ENCODE measurements at regions of chr20 and their contacts with region 1.

Region 1: DNA sequence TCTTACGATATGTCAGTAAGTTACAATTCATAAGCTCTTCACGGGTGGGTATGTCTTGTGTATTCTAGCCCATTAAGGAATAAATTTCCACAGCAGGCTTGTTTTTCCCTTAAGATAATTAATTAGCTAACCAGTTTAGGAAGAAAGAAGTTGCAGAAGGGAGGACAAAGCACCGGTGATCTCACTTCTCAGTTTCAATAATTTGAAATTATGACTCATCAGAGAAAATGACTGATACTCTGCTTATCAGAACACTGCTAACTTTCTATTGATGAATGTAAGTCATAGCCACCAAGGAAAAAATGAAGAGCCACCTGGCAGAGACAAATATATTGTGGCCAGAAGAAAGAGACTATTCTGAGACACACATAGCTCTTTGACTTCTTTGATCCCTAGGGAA is 35.0 kb upstream of the ENTPD6 start:
- DNase-seq: no peak
- H3K4me3 Mint-ChIP-seq: no peak overlapping the region
- H3K27ac Mint-ChIP-seq: no peak overlapping the region
- H3K4me1 Mint-ChIP-seq: peaks cover 16% of the 10 kb centered on the region
- H3K27me3 Mint-ChIP-seq: peaks cover 5% of the 10 kb centered on the region

Region 2: DNA sequence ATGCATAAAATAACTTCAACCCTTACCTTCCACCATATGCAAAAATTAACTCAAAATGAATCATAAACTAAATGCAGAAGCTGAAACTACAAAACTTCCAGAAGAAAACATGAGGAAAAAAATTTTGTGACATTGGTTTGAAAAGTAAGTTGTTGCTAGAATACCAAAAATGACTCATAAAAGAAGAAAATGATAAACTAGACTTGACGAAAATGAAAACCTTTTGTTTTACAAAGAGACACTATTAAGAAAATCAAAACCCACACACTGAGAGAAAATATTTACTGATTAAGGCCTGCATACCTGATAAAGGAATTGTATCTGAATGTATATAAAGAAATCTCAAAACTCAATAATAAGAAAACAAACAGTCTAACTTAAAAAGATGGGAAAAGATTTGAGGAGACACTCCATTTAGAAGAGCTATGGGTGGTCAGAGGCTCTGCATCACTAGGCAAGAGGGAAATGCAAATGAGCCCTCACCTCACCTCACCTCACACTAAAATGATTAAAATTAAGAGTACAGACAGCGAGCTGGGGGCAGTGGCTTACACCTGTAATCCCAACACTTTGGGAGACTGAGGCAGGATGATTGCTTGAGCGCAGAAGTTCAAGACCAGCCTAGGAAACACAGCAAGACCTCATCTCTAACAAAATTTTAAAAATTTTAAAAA is 309.0 kb before region 1 on chr20:
- CTCF ChIA-PET with region 1: no interaction called
- intact Hi-C with region 1: no loop called
- DNase-seq: no peak
- H3K4me3 Mint-ChIP-seq: no peak overlapping the region
- H3K27ac Mint-ChIP-seq: no peak overlapping the region
- H3K4me1 Mint-ChIP-seq: no peaks in the 10 kb centered on the region
- H3K27me3 Mint-ChIP-seq: peaks cover 20% of the 10 kb centered on the region

Region 3: DNA sequence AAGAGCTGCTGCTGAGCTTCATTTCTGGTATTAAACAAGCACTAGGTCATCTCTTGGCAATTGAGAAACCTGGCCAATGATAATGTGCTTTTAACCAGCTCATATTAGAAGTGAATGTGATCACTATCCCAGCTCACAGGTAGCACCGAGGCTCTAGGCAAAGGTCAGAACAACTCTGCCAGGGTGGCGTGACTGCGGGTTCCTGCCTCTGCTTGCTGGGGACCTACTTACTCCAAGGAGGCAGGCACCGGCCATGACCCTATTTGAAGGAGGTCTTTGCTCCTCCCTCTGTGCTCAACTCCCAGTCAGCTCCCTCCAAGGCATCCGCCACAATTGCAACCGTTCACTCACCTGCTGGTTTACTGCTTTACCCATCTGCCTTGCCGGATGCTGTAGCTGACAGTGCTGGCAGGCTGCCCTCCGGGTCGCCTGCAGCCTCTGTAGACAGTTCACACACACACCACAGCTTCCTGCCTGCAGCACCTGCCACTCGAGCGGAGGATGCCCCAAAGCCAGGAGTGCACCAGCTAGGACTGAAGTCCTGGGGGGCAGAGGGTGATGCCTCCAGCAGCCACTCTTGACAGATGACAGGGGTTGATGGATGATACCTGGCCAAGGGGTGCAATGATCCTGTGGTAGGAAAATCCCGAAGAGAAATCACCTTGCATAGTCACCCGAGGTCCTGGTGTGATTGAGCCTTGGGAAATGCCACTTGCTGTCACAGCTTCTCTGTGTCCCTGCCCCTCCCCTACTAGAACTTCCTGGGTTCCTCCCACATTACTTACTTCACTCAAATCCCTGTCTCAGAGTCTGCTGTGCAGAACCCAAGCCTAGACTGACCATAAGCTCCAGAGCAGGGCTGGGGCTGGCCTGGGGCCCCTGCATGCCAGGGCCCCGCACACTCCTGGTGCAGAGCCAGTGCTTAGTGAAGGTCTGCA is 69.7 kb before region 1 on chr20:
- CTCF ChIA-PET with region 1: interaction called, 7 read pairs
- intact Hi-C with region 1: loop called (anchors 2 kb)
- DNase-seq: peak; percentile 88
- H3K4me3 Mint-ChIP-seq: peak overlapping the region; percentile 41
- H3K27ac Mint-ChIP-seq: peak overlapping the region; percentile 44
- H3K4me1 Mint-ChIP-seq: peaks cover 28% of the 10 kb centered on the region
- H3K27me3 Mint-ChIP-seq: peaks cover 7% of the 10 kb centered on the region

Region 4: DNA sequence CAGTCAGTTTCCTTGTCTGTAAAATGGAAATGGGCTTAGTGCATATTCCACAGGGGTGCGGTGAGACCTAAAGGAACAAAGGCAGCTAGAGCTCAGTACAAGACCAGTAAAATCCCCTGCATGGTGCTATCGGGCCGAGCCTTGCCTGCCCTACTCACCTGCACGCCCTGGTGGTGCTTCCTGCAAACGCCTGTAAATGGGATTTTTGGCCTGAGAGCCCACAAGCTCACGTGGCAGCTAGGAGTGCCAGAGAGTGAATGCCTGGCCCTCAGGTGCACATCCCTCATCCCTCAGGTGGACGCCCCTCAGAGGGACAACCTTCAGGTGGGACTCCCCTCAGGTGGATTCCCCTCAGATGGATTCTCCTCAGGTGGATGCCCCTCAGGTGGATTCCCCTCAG is 30.6 kb before region 1 on chr20:
- CTCF ChIA-PET with region 1: no interaction called
- intact Hi-C with region 1: loop called (anchors 5 kb)
- DNase-seq: no peak
- H3K4me3 Mint-ChIP-seq: no peak overlapping the region
- H3K27ac Mint-ChIP-seq: no peak overlapping the region
- H3K4me1 Mint-ChIP-seq: no peaks in the 10 kb centered on the region
- H3K27me3 Mint-ChIP-seq: peaks cover 2% of the 10 kb centered on the region

Region 5: DNA sequence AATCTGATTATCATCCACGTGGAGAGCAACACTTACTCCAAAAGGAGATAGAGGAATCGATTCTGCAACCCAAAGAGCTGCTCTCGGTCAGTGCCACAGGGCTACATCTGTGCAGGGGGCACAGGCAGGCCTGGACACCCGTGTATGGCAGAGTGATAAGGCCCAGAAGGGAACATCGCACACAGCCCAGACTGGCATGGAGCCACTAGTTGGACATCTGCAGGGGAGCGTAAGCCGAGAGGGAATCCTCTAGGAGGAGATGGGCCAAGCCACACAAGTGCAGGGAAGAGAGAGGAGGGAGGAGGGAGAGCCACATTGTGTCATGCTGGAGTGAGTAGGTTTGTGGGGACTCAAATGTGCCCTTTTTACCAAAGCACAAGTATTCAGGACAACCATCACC is 15.3 kb before region 1 on chr20:
- CTCF ChIA-PET with region 1: no interaction called
- intact Hi-C with region 1: no loop called
- DNase-seq: no peak
- H3K4me3 Mint-ChIP-seq: no peak overlapping the region
- H3K27ac Mint-ChIP-seq: no peak overlapping the region
- H3K4me1 Mint-ChIP-seq: peaks cover 6% of the 10 kb centered on the region
- H3K27me3 Mint-ChIP-seq: peaks cover 4% of the 10 kb centered on the region

Region 6: GRCh38 chr20:25188218-25188617 is 27.8 kb after region 1 on chr20:
- CTCF ChIA-PET with region 1: no interaction called
- intact Hi-C with region 1: no loop called
- DNase-seq: no peak
- H3K4me3 Mint-ChIP-seq: no peak overlapping the region
- H3K27ac Mint-ChIP-seq: no peak overlapping the region
- H3K4me1 Mint-ChIP-seq: no peaks in the 10 kb centered on the region
- H3K27me3 Mint-ChIP-seq: peaks cover 26% of the 10 kb centered on the region

Region 7: GRCh38 chr20:25461771-25462545 is 301.5 kb after region 1 on chr20:
- CTCF ChIA-PET with region 1: no interaction called
- intact Hi-C with region 1: no loop called
- DNase-seq: no peak
- H3K4me3 Mint-ChIP-seq: no peak overlapping the region
- H3K27ac Mint-ChIP-seq: no peak overlapping the region
- H3K4me1 Mint-ChIP-seq: no peaks in the 10 kb centered on the region
- H3K27me3 Mint-ChIP-seq: no peaks in the 10 kb centered on the region